ENCODE measurements at regions of chr5 and their contacts with region 1.

Region 1: GRCh38 chr5:159826351-159827214 is 89.7 kb upstream of the ADRA1B start:
- DNase-seq: peak; percentile 84 to 99
- H3K4me3 ChIP-seq: no peak overlapping the region
- H3K27ac ChIP-seq: peak overlapping the region; percentile 99
- H3K4me1 ChIP-seq: peaks cover 64% of the 10 kb centered on the region
- H3K27me3 ChIP-seq: no peaks in the 10 kb centered on the region
- CTCF ChIP-seq: no peak

Region 2: DNA sequence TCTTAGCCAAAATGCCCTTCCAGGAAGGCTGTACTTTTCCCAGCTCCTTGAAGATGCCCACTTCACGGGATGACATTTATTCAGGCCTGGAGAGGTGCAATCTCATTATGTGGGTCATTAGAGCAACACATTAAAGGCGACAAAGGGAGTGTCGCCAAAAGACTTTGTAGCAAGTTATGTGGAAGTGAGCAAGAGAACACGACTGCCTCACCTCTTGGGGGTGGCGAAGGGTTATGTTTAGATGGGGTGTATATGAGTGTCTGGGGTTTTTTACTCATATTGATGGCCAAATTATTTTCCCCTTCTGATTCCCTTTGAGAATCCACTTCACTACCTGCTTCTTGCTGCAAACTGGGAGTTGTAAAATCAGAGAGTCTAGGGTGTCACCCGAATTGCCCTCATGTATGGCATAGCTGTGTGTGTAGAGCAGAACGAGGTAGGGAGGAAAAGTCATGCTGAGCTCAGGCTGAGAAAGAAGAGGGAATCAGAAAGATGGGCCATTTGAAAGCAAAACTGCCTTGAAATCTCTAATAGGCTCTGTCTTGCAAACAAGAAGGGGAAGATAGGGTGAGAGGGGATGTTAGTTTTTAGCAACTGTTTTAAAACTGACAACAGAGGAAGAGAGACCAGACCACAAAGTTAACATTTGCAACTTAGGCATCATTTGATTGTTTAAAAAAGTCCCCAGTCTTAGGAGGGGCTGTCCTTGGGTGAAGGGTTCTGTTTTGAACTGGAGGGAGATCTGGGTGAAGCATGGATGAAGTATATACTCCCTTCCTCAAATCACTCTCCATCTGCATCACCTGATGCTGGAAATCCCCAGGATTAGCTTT is 399.2 kb before region 1 on chr5:
- CTCF ChIA-PET with region 1: no interaction called
- POLR2A ChIA-PET with region 1: no interaction called
- intact Hi-C with region 1: no loop called
- DNase-seq: no peak
- H3K4me3 ChIP-seq: no peak overlapping the region
- H3K27ac ChIP-seq: no peak overlapping the region
- H3K4me1 ChIP-seq: no peaks in the 10 kb centered on the region
- H3K27me3 ChIP-seq: peaks cover 20% of the 10 kb centered on the region
- CTCF ChIP-seq: no peak

Region 3: GRCh38 chr5:159456722-159457465 is 369.7 kb before region 1 on chr5:
- CTCF ChIA-PET with region 1: no interaction called
- POLR2A ChIA-PET with region 1: no interaction called
- intact Hi-C with region 1: loop called (anchors 5 kb)
- DNase-seq: peak; percentile 54 to 63
- H3K4me3 ChIP-seq: no peak overlapping the region
- H3K27ac ChIP-seq: peak overlapping the region; percentile 42; the same call in 1 of the 2 replicates
- H3K4me1 ChIP-seq: peaks cover 29% of the 10 kb centered on the region
- H3K27me3 ChIP-seq: no peaks in the 10 kb centered on the region
- CTCF ChIP-seq: no peak

Region 4: GRCh38 chr5:159773062-159773924 is 53.3 kb before region 1 on chr5:
- CTCF ChIA-PET with region 1: no interaction called
- POLR2A ChIA-PET with region 1: no interaction called
- intact Hi-C with region 1: loop called (anchors 5 kb)
- DNase-seq: peak; percentile 71 to 83
- H3K4me3 ChIP-seq: peak overlapping the region; percentile 61
- H3K27ac ChIP-seq: peak overlapping the region; percentile 66
- H3K4me1 ChIP-seq: peaks cover 33% of the 10 kb centered on the region
- H3K27me3 ChIP-seq: no peaks in the 10 kb centered on the region
- CTCF ChIP-seq: peak; percentile 38; the same call in 1 of the 2 replicates

Region 5: DNA sequence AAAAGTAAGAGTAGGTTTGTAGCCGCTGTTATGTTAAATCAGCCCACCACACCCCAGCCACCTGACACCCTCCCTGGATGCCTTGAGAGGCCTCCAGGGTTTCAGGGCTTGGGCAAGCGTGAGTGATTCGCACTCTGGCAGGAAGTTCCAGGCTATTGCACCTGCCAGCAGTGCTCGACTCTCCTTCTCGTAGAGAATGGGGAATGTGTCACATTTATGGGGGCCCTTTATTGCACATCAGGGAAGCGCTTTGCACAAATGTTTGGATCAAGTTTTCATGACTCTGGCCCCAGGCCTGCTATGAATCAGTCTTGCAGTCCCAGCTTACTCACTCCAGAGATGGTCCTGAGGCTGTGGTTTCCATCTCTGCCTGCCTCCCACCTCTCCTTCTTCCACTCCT is 23.6 kb after region 1 on chr5:
- CTCF ChIA-PET with region 1: no interaction called
- POLR2A ChIA-PET with region 1: no interaction called
- intact Hi-C with region 1: loop called (anchors 1 kb)
- DNase-seq: peak; percentile 45 to 95
- H3K4me3 ChIP-seq: no peak overlapping the region; the same call in 1 of the 2 replicates
- H3K27ac ChIP-seq: peak overlapping the region; percentile 95
- H3K4me1 ChIP-seq: peaks cover 36% of the 10 kb centered on the region
- H3K27me3 ChIP-seq: no peaks in the 10 kb centered on the region
- CTCF ChIP-seq: no peak

Region 6: GRCh38 chr5:159878988-159879471 is 52.4 kb after region 1 on chr5:
- CTCF ChIA-PET with region 1: no interaction called
- POLR2A ChIA-PET with region 1: no interaction called
- intact Hi-C with region 1: loop called (anchors 2 kb)
- DNase-seq: peak; percentile 59 to 74
- H3K4me3 ChIP-seq: no peak overlapping the region
- H3K27ac ChIP-seq: peak overlapping the region; percentile 22; the same call in 1 of the 2 replicates
- H3K4me1 ChIP-seq: peaks cover 29% of the 10 kb centered on the region
- H3K27me3 ChIP-seq: no peaks in the 10 kb centered on the region
- CTCF ChIP-seq: no peak